WTC11 (cell line): ENCODE measurements at regions of chr7 and their contacts with region 1.

Region 1: DNA sequence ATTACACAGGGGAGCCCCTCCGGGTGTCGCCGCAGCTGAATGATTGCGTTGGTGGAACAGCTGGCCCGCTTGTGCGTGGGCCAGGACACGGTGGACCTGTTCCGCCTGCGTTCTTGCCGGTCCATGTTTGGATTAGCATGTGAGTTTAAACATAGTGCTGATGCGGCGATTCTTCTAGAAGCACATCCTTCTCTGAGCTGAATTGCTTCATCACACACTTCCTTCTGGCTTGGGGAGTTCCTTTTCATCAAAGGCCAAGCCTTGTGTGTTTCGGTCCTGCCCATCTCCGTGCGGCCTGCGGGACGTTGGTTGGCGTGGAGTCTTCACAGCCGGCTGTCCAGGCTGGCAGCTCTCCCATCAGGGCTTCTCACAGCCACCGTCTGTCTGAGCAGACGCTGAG is 45.5 kb upstream of the SLC29A4 start:
- DNase-seq: no peak
- ATAC-seq: no peak
- H3K4me3 Mint-ChIP-seq: no peak overlapping the region
- H3K27ac Mint-ChIP-seq: no peak overlapping the region
- H3K4me1 Mint-ChIP-seq: peaks cover 5% of the 10 kb centered on the region
- H3K27me3 Mint-ChIP-seq: peaks cover 14% of the 10 kb centered on the region
- CTCF ChIP-seq: no peak

Region 2: GRCh38 chr7:5278766-5279165 is 41.5 kb after region 1 on chr7:
- CTCF ChIA-PET with region 1: interaction called, 68 read pairs
- POLR2A ChIA-PET with region 1: no interaction called
- DNase-seq: no peak
- ATAC-seq: no peak
- H3K4me3 Mint-ChIP-seq: no peak overlapping the region
- H3K27ac Mint-ChIP-seq: no peak overlapping the region
- H3K4me1 Mint-ChIP-seq: no peaks in the 10 kb centered on the region
- H3K27me3 Mint-ChIP-seq: peaks cover 7% of the 10 kb centered on the region
- CTCF ChIP-seq: no peak

Region 3: GRCh38 chr7:5296611-5297226 is 59.4 kb after region 1 on chr7:
- CTCF ChIA-PET with region 1: interaction called, 47 read pairs
- POLR2A ChIA-PET with region 1: interaction called, 5 read pairs
- DNase-seq: peak; percentile 88
- ATAC-seq: peak; percentile 81
- H3K4me3 Mint-ChIP-seq: peak overlapping the region; percentile 74
- H3K27ac Mint-ChIP-seq: no peak overlapping the region
- H3K4me1 Mint-ChIP-seq: peaks cover 9% of the 10 kb centered on the region
- H3K27me3 Mint-ChIP-seq: peaks cover 19% of the 10 kb centered on the region
- CTCF ChIP-seq: no peak

Region 4: DNA sequence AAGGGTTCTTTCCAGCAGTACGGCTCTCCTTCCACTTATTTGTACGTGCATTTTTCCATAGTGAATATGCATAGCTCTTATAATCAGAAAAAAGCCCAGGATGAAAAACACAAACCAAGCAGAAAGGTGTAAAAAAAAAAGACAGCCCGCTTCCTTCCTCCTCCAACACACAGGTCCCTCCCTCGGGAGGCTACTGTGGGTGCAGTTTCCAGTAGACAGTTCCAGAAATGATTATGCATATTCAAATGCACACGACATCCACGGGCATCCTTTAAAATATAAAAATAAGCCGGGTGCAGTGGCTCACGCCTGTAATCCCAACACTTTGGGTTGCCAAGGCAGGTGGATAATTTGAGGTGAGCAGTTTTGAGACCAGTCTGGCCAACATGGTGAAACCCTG is 126.4 kb after region 1 on chr7:
- CTCF ChIA-PET with region 1: interaction called, 29 read pairs
- POLR2A ChIA-PET with region 1: interaction called, 3 read pairs
- DNase-seq: no peak
- ATAC-seq: no peak
- H3K4me3 Mint-ChIP-seq: no peak overlapping the region
- H3K27ac Mint-ChIP-seq: no peak overlapping the region
- H3K4me1 Mint-ChIP-seq: no peaks in the 10 kb centered on the region
- H3K27me3 Mint-ChIP-seq: no peaks in the 10 kb centered on the region
- CTCF ChIP-seq: no peak

Region 5: GRCh38 chr7:5477723-5478531 is 240.6 kb after region 1 on chr7:
- CTCF ChIA-PET with region 1: interaction called, 18 read pairs
- POLR2A ChIA-PET with region 1: no interaction called
- DNase-seq: peak; percentile 71
- ATAC-seq: peak; percentile 88
- H3K4me3 Mint-ChIP-seq: peak overlapping the region; percentile 40; the same call in 1 of the 2 replicates
- H3K27ac Mint-ChIP-seq: peak overlapping the region; percentile 98
- H3K4me1 Mint-ChIP-seq: peaks cover 20% of the 10 kb centered on the region
- H3K27me3 Mint-ChIP-seq: no peaks in the 10 kb centered on the region
- CTCF ChIP-seq: peak; percentile 33

Region 6: DNA sequence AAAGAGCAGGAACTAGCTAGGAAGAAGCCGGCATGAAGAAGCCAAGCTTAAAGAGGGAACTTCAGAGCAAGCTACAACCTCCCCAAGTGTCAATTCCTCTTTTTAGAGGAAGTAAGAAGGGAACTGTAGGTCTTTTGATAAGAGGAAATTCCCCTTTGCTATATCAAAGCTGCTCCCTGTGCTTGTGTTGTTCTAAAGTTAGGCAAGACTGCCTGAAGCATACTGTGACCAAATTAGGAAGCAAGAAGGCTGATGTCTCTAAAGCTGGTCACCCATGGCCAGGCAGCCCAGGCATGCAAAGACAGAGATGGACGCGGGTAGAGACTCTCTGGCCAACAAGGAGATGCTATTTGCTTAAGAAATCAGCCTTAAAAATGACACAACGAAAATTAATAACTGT is 456.2 kb after region 1 on chr7:
- CTCF ChIA-PET with region 1: no interaction called
- POLR2A ChIA-PET with region 1: no interaction called
- DNase-seq: no peak
- ATAC-seq: no peak
- H3K4me3 Mint-ChIP-seq: no peak overlapping the region
- H3K27ac Mint-ChIP-seq: peak overlapping the region; percentile 57; the same call in 1 of the 2 replicates
- H3K4me1 Mint-ChIP-seq: peaks cover 14% of the 10 kb centered on the region
- H3K27me3 Mint-ChIP-seq: no peaks in the 10 kb centered on the region
- CTCF ChIP-seq: no peak